ENCODE measurements at regions of chr9 and their contacts with region 1.

Region 1: DNA sequence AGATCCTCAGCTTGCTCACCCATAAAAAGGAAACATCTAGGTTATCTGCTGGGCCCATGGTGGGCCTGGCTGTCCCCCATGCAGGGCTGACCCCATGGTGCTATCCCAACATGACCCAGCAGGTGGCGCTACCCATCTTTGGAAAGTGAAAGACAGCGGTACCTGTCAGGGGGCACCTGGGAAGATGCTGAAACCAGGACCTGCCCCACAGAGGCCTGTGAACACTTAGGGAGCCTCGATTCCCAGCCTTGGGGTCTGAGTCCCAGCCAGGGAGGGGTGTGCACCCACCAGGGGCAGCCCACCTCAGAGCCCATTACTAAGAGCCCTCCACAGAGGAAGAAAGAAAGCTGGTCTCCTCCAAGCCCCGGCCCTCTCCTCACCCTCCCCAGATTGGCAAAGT is 46.6 kb upstream of the IPPK start:
- DNase-seq: peak; percentile 87
- H3K4me3 Mint-ChIP-seq: no peak overlapping the region
- H3K27ac Mint-ChIP-seq: no peak overlapping the region
- H3K4me1 Mint-ChIP-seq: peaks cover 14% of the 10 kb centered on the region
- H3K27me3 Mint-ChIP-seq: no peaks in the 10 kb centered on the region

Region 2: GRCh38 chr9:92634712-92635605 is 81.6 kb before region 1 on chr9:
- CTCF ChIA-PET with region 1: no interaction called
- intact Hi-C with region 1: no loop called
- DNase-seq: peak; percentile 78
- H3K4me3 Mint-ChIP-seq: no peak overlapping the region
- H3K27ac Mint-ChIP-seq: no peak overlapping the region
- H3K4me1 Mint-ChIP-seq: no peaks in the 10 kb centered on the region
- H3K27me3 Mint-ChIP-seq: no peaks in the 10 kb centered on the region

Region 3: GRCh38 chr9:92654481-92655301 is 61.9 kb before region 1 on chr9:
- CTCF ChIA-PET with region 1: no interaction called
- intact Hi-C with region 1: no loop called
- DNase-seq: no peak
- H3K4me3 Mint-ChIP-seq: no peak overlapping the region
- H3K27ac Mint-ChIP-seq: no peak overlapping the region
- H3K4me1 Mint-ChIP-seq: no peaks in the 10 kb centered on the region
- H3K27me3 Mint-ChIP-seq: no peaks in the 10 kb centered on the region

Region 4: DNA sequence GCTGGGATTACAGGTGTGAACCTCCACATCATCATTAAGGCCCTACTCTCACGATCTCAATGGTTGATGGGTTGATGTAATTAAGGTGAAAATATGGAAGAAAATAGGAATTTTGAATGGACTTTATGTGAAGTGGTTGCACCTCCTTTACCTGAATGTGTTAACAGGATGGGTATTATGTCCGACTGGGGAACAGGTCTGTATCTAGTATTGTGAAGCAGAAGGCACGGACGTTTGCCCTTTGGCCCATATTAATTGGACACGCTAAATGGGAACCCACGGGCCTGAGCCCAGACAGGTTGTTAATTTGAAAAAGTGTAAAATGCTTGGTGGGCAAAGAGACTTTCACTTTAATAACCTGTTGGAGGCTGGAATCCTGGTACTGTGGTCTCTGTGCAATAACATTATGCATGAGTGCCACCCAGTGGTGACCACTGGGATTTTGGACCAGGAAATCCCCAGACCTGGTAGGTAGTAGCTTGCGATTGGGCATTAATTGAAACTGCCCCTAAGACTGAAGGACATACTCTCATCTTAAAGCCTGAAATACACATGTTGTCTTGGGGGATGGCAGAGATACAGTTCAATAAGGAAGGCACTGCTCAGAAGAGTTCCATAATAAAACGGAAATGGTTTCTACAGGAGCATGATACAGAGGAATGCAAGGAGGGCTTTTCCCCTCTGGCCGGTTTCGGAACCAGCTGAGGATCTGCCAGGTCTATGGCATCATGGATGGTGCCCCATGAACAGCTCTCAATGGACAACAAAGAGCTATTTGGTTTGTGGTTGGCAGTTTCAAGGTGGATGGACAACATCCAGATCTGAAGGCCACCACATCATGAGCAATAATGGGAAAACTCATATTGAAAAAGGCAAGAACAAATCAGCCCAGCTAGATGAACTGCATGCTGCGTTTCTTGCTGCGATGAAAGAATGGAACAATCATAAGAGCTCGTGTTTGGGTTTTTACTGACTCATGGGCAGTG is 74.3 kb after region 1 on chr9:
- CTCF ChIA-PET with region 1: interaction called, 89 read pairs
- intact Hi-C with region 1: loop called (anchors 1 kb)
- DNase-seq: peak; percentile 85
- H3K4me3 Mint-ChIP-seq: no peak overlapping the region
- H3K27ac Mint-ChIP-seq: no peak overlapping the region
- H3K4me1 Mint-ChIP-seq: peaks cover 3% of the 10 kb centered on the region
- H3K27me3 Mint-ChIP-seq: no peaks in the 10 kb centered on the region